ENCODE measurements at regions of chr10 and their contacts with region 1.

Region 1: DNA sequence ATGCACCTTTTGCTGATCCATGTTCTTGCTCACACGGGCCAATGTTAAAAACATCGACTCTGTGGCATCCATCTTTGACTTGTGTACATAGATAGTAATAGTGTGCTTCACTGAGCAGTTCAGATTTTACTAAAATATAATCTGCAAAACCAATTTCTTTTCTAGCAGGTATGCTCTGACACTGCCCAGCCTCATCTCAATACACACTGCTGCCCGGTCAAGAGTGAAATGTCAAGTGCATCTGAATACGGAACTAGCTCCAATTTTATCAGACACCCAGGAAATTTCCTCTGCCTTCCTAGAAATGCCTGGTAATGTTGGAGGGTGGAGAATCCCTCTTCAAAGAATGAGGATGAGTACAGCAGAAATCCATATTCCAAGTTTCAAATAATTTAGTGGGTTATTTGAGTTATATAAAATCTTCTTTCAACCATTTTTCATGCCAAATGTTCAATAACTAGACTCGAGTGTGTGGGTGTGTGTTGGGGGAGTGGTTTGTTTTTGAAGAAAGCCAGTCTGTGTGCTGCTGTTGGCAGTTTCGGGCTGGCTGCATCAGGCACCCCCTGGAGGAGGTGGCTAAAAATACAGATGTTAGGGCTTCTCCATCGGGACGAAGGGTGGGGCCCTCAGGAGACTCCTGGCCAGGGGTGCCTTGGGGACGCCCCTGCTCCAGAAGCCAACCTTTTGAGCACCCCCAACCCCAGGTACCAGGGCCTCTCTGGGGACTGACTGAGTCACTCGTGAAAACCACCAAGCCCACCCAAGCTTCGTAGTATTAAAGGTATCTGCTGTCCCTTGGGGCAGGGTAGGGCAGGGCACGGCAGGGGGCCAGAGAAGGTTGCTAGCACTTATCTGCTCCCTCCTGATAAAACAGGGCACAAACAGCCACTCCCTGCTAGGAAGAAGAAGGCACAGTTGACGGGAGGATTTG is 15.4 kb downstream of the CTBP2 start:
- DNase-seq: peak; percentile 61
- ATAC-seq: peak; percentile 93
- H3K4me3 ChIP-seq: peak overlapping the region in 1 of 2 experiments; percentile 5; a peak in 1 of 4 replicates
- H3K27ac ChIP-seq: peak overlapping the region; percentile 6; the same call in 1 of the 2 replicates
- H3K4me1 ChIP-seq: peaks cover 45 to 62% of the 10 kb centered on the region in 2 experiments
- H3K27me3 ChIP-seq: no peaks in the 10 kb centered on the region
- CTCF ChIP-seq: peak; percentile 73 to 78 (median 76); a peak in 5 of 6 replicates
- POLR2A ChIP-seq: no peak
- RAD21 ChIP-seq: peak; percentile 80

Region 2: GRCh38 chr10:124992462-124993344 is 152.3 kb before region 1 on chr10:
- CTCF ChIA-PET with region 1: no interaction called
- POLR2A ChIA-PET with region 1: no interaction called
- RAD21 ChIA-PET with region 1: no interaction called
- intact Hi-C with region 1: loop called (anchors 1 kb)
- DNase-seq: peak; percentile 43
- ATAC-seq: peak; percentile 86
- H3K4me3 ChIP-seq: no peak overlapping the region
- H3K27ac ChIP-seq: no peak overlapping the region
- H3K4me1 ChIP-seq: no peaks in the 10 kb centered on the region
- H3K27me3 ChIP-seq: no peaks in the 10 kb centered on the region
- CTCF ChIP-seq: peak; percentile 49 to 68 (median 66); a peak in 5 of 6 replicates
- POLR2A ChIP-seq: no peak
- RAD21 ChIP-seq: peak; percentile 78

Region 3: GRCh38 chr10:125084191-125084613 is 60.8 kb before region 1 on chr10:
- CTCF ChIA-PET with region 1: no interaction called
- POLR2A ChIA-PET with region 1: no interaction called
- RAD21 ChIA-PET with region 1: no interaction called
- intact Hi-C with region 1: loop called (anchors 5 kb)
- DNase-seq: peak; percentile 85
- ATAC-seq: peak; percentile 94
- H3K4me3 ChIP-seq: peak overlapping the region in 1 of 2 experiments; percentile 27; a peak in 2 of 4 replicates
- H3K27ac ChIP-seq: peak overlapping the region; percentile 62
- H3K4me1 ChIP-seq: peaks cover 49 to 73% of the 10 kb centered on the region in 2 experiments
- H3K27me3 ChIP-seq: no peaks in the 10 kb centered on the region
- CTCF ChIP-seq: peak in 2 of 3 experiments; percentile 49 to 60; a peak in 4 of 6 replicates
- POLR2A ChIP-seq: no peak
- RAD21 ChIP-seq: no peak

Region 4: DNA sequence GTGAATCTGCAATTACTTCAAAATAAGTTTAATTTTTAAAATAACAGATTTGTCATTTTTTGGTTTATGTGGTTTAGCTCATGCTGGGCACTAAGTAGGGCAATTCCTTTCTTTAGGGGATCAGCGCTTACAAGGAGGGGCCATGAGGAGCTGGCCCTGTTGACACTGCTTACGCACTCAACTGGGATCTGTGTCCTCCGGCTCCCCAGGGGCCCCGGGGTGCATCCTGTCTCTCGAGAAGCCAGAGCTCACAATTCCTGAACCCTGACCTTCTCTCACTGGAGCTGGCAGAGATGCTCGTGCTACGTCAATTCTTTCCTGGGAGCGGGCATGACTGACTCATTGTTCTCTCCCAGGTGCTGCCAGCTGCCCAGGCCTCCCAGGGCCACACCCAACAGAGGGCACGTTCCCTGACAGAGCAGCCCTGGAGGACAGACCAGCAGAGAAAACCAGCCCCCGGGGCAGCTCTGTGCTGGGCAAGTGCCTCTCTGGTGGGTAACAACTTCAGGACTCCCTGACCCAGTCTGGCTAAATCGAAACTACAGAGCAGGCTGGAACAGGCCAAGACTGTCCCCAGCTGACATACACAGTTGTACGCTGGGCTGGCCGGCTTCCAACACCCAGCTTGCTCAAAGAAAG is 21.4 kb before region 1 on chr10:
- CTCF ChIA-PET with region 1: interaction called, 3 read pairs
- POLR2A ChIA-PET with region 1: interaction called, 4 read pairs
- RAD21 ChIA-PET with region 1: interaction called in 1 of 2 experiments, 4 read pairs
- intact Hi-C with region 1: loop called (anchors 1 kb)
- DNase-seq: peak; percentile 96
- ATAC-seq: peak; percentile 84
- H3K4me3 ChIP-seq: peak overlapping the region; percentile 0 to 42
- H3K27ac ChIP-seq: peak overlapping the region; percentile 80
- H3K4me1 ChIP-seq: peaks cover 66 to 84% of the 10 kb centered on the region in 2 experiments
- H3K27me3 ChIP-seq: no peaks in the 10 kb centered on the region
- CTCF ChIP-seq: no peak
- POLR2A ChIP-seq: no peak
- RAD21 ChIP-seq: no peak

Measured in HCT116 (cell line).